ENCODE measurements at regions of chr1 and their contacts with region 1.

Region 1: GRCh38 chr1:181128592-181129497 is 40.3 kb downstream of the IER5 start:
- DNase-seq: no peak
- ATAC-seq: peak in 1 of 2 experiments; percentile 7; a peak in 2 of 6 replicates
- H3K4me3 ChIP-seq: no peak overlapping the region
- H3K27ac ChIP-seq: peak overlapping the region; percentile 73 to 90
- H3K4me1 ChIP-seq: peaks cover 76% of the 10 kb centered on the region
- CTCF ChIP-seq: no peak
- EP300 ChIP-seq: no peak
- POLR2A ChIP-seq: no peak
- RAD21 ChIP-seq: no peak

Region 2: GRCh38 chr1:181099152-181100014 is 29.5 kb before region 1 on chr1:
- CTCF ChIA-PET with region 1: interaction called, 774 read pairs
- POLR2A ChIA-PET with region 1: interaction called, 45 read pairs
- DNase-seq: no peak
- ATAC-seq: no peak
- H3K4me3 ChIP-seq: no peak overlapping the region
- H3K27ac ChIP-seq: peak overlapping the region; percentile 66 to 98
- H3K4me1 ChIP-seq: peaks cover 86% of the 10 kb centered on the region
- CTCF ChIP-seq: no peak
- EP300 ChIP-seq: no peak
- POLR2A ChIP-seq: no peak
- RAD21 ChIP-seq: no peak

Region 3: DNA sequence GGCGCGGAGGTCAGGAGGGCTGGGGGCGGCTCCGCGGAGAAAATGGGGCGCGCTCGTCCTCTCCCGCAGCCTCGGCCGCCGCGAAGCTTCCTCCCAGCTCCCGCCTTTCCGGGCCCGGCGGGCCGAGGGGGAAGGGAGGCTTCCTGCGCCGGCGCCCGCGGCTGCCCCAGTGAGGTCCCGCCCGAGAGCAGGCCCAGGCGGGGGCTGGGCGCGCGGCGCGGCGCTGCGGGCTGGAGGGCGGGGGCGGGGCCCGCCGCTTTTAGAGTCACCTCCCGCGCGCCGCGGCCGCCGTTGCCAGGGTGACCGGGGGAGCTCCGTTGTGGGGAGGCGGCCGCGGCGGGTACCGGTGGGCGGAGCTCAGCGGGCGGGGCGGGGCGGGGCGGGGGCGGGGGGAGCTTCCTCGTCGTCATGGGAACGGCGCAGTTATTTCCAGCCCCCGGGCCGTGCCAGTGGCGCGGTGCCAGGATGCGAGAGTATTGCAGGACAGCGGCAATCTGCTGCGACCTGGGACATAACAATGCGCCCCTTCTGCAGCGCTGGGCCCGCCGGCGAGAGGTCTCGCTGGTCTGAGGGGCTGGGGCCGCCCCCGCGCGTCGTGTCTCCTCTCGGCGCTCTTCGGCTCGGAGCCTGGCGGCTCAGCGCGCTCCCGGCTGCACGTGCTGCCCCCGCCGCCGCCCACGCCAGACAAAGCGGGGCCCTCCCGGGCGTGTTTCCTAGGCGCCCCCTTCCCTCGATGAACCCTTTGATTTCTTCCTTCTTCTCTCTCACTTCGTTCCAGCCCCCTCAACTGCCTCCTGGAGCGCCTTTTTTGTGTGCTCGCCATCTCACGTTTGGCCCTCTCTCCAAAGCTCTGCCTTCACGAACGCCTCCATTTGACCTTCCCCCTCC is 23.5 kb before region 1 on chr1:
- CTCF ChIA-PET with region 1: interaction called, 774 read pairs
- POLR2A ChIA-PET with region 1: interaction called, 45 read pairs
- DNase-seq: peak; percentile 84 to 90
- ATAC-seq: peak; percentile 75 to 81
- H3K4me3 ChIP-seq: peak overlapping the region; percentile 65
- H3K27ac ChIP-seq: peak overlapping the region; percentile 98 to 99
- H3K4me1 ChIP-seq: peaks cover 89% of the 10 kb centered on the region
- CTCF ChIP-seq: no peak
- EP300 ChIP-seq: peak in 1 of 2 experiments; percentile 28; a peak in 1 of 5 replicates
- POLR2A ChIP-seq: peak; percentile 47; the same call in 1 of the 2 replicates
- RAD21 ChIP-seq: no peak; a peak in 1 of 5 replicates

Region 4: DNA sequence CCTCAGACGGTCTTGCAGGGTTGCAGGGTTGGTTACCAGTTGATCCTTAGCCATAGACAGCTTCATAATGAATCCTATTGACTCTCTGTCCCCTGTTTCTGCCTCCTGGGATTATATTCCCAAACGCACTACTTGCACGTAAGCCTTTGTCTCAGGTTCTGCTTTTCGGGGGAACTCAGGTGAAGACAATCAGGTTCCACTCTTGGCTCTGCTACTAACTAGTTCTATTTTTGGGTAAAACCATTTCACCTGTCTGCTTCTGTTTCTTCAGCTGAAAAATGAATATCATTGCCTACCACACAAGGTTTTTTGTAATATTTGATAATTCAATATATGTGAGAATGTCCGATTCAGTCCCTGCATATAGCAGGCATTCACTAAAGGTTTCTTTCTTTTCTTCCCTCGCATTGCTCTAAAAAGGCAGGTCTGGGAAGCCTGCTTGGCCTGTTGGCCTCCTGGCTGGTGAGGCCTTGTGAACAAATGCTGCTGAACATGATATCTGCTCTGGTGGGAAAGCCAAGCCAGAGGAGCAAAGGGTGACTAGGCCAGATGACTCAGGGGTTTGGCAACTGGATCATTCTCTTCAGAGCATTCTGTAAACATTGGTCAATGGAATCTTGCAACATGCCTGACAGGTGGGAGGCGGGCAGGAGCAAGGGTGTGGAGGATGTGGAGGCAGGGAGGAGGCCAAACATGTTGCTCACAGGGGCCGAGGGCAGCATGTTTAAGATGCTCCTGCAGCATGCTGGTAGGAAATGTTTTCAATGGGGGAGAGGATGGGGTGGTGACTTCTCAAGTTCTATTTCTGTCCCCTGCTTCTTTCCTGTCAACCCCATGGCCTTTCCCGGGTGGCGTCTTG is 16.5 kb before region 1 on chr1:
- CTCF ChIA-PET with region 1: interaction called, 774 read pairs
- POLR2A ChIA-PET with region 1: interaction called, 7 read pairs
- DNase-seq: peak; percentile 97 to 99
- ATAC-seq: peak; percentile 85 to 91
- H3K4me3 ChIP-seq: peak overlapping the region; percentile 14; the same call in 1 of the 3 replicates
- H3K27ac ChIP-seq: peak overlapping the region; percentile 93 to 98
- H3K4me1 ChIP-seq: peaks cover 95% of the 10 kb centered on the region
- CTCF ChIP-seq: no peak
- EP300 ChIP-seq: peak; percentile 93; a peak in 4 of 5 replicates
- POLR2A ChIP-seq: no peak; the same call in 1 of the 2 replicates
- RAD21 ChIP-seq: peak; percentile 29 to 61

Region 5: DNA sequence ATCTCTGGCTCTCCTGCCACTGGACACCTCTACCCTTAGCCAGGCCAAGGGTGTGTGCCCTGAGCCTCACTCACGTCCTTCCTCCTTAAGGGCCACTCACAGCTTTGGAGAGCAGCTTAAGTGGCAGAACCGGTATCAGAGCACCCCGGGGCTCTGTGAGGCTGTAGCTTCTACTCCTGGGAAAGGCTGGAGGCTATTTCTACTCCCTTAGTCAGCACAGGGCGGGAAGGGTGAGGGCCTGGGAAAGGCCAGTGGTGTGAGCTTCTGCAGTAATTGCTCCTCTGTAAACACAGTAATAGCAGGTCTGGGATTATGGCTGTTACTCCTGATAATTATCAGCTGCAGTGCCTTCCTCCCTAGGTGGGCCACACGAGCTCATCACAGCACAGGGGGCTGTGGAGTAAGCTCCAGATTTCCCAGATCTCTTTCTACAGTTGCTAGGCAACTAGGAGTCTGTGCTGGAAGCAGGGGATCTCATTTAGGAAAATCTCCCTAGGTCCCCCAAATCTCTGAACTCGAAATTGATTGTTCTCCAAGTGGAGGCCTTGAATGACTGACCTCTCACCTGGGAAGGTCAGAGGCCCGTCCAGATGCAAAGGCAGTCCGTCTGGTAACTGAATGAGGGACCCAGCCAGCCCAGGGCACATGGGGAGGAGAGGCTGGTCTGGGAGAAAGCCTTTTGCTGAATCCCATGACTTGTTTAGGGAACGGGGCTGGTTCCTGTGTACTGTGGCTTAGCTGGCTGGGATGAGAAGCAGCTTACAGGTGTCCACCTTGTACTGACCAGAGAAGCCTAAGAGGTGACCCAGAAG is 11.0 kb before region 1 on chr1:
- CTCF ChIA-PET with region 1: interaction called, 774 read pairs
- POLR2A ChIA-PET with region 1: interaction called, 7 read pairs
- DNase-seq: peak in 1 of 2 experiments; percentile 73
- ATAC-seq: peak; percentile 51 to 57
- H3K4me3 ChIP-seq: no peak overlapping the region
- H3K27ac ChIP-seq: peak overlapping the region; percentile 64 to 98
- H3K4me1 ChIP-seq: peaks cover 90% of the 10 kb centered on the region
- CTCF ChIP-seq: no peak
- EP300 ChIP-seq: no peak
- POLR2A ChIP-seq: no peak
- RAD21 ChIP-seq: no peak

Region 6: DNA sequence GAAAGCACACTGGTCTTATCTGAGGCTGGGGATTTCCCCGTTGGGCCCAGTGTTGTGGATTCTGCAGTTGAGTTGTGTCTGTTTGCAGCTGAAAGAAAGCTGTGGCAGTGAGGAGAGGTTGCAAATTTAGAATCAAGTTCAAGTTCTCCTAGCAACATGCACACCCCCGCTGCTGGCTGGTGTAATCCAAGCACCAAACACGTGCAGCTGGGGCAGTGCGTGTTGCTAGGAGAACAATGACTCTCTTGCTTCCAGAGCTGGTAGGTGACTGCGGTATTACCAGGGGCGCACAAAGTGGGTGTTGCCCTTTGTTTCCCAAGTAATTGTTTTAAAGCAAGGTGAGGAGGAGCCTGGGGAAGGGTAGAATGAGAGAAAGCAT is 51.1 kb after region 1 on chr1:
- CTCF ChIA-PET with region 1: no interaction called
- POLR2A ChIA-PET with region 1: no interaction called
- DNase-seq: no peak
- ATAC-seq: no peak
- H3K4me3 ChIP-seq: no peak overlapping the region
- H3K27ac ChIP-seq: no peak overlapping the region
- H3K4me1 ChIP-seq: no peaks in the 10 kb centered on the region
- CTCF ChIP-seq: no peak
- EP300 ChIP-seq: no peak
- POLR2A ChIP-seq: no peak
- RAD21 ChIP-seq: no peak

Measured in A549 (cell line).